ENCODE measurements at regions of chr2 and their contacts with region 1.

Region 1: DNA sequence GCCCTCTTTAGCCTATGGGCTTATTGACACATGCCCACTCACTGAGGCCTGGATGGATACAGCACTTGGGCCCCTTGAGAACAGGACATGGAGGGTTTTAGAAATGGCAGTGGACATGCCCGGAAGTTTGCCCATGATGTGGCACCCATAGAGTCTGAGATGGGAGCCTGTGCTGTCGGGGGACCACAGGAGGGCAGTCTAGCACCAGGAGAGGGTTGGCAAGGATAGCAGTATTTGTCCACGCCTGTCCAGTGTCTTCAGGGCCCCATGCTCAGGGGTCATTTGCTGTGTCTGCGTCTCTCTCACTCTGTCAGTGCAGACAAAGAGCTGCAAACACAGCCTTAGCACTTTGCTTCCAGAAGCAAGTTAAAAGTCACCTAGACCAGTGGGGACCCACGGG is 48.7 kb downstream of the IL1RL2 start:
- DNase-seq: peak; percentile 20 to 34 (median 32)
- H3K4me3 ChIP-seq: no peak overlapping the region
- H3K27ac ChIP-seq: no peak overlapping the region
- H3K4me1 ChIP-seq: no peaks in the 10 kb centered on the region
- H3K27me3 ChIP-seq: no peaks in the 10 kb centered on the region

Region 2: DNA sequence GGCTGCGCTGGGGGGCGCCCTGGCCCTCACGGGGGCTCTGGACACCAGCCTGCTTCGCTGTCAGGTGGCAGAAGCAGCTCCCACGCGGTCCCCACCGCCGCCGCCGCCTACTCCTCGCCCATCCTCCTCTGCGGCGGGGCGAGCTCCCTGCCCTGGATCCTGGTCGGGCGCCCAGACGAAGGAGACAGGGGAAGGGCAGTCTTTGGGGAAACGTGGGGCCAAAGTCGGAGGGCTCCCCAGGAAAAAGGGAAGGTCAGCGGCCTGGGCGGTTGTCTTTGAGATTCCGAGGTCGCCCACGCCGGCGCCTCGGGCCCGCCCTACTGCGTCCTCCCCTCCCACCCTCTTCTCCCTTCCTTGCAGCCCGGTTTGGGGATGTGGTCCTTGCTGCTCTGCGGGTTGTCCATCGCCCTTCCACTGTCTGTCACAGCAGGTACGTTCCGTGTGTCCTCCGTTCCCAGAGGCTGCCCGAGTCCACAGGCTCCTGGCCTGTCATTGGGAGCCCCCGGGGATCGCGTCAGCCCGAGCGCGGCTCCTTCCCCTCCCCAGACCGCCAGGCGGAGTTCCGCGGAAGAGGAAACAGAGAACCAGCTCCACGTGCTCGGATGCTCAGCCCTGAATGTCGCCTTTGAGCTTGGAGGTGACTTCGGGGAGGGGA is 47.9 kb before region 1 on chr2:
- CTCF ChIA-PET with region 1: interaction called, 19 read pairs
- POLR2A ChIA-PET with region 1: no interaction called
- DNase-seq: peak; percentile 36 to 52 (median 49)
- H3K4me3 ChIP-seq: peak overlapping the region in 6 of 7 experiments; percentile 6 to 75 (median 52)
- H3K27ac ChIP-seq: no peak overlapping the region
- H3K4me1 ChIP-seq: peaks cover 0 to 12% (median 4%) of the 10 kb centered on the region in 4 experiments
- H3K27me3 ChIP-seq: peaks cover 0 to 14% (median 0%) of the 10 kb centered on the region in 5 experiments

Region 3: DNA sequence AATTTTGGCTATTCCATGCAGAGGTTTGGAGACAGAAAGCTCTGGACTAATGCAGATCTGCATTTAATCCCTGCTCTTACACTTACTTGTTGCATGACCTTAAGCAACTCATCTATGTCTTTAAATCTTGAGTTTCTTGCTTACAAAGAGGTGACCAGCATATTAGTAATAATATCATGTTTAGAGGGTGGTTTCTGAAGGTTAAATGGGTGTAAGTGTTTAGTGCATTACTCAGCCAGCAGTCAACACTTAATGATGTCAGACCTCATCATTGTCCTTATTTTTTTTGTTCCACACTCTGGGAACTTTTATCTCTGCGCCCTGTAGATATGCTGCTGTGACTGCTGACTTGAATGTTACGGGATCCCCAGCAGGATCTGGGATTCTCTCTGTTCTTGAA is 77.5 kb after region 1 on chr2:
- CTCF ChIA-PET with region 1: no interaction called
- POLR2A ChIA-PET with region 1: no interaction called
- DNase-seq: no peak
- H3K4me3 ChIP-seq: no peak overlapping the region
- H3K27ac ChIP-seq: no peak overlapping the region
- H3K4me1 ChIP-seq: peaks cover 0 to 13% (median 8%) of the 10 kb centered on the region in 4 experiments
- H3K27me3 ChIP-seq: no peaks in the 10 kb centered on the region

Region 4: DNA sequence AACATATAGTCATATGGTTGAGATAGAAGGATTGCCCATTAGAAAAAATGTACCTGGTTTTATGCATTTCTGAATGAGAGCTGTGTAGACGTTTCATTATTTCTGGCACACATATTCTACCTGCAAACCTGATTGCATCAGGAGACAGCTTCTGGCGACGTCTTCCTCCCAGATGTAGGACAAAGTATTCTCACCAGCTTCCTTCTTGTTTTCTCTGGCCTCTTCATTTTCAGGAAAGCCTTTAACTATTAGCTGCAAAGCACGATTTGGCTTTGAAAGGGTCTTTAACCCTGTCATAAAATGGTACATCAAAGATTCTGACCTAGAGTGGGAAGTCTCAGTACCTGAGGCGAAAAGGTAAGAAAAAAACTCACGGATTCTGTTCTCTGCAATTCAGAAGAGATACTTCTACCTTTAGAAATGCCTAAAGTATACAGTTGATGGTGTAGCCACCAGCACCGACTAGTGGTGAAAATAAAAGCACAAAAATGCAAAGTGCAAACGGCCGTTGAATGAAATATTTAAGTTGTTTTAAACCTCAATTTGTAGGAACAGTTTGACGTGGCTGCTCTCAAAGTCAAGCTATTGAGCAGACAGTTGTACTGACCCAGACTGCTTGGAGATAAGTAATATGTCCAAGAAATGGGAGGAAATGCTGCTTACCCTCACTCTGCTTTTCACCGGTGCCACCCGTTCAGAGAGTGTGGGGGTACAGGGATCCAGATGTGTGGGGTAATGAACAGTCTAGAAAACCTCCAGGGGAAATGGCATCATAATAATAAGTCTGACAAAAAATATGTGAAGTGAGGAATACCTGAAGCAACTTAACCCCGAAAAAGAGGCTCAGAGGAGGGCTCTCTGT is 207.7 kb after region 1 on chr2:
- CTCF ChIA-PET with region 1: interaction called, 33 read pairs
- POLR2A ChIA-PET with region 1: interaction called, 3 read pairs
- DNase-seq: peak; percentile 53 to 69 (median 59)
- H3K4me3 ChIP-seq: peak overlapping the region in 1 of 7 experiments; percentile 49
- H3K27ac ChIP-seq: no peak overlapping the region
- H3K4me1 ChIP-seq: peaks cover 4 to 15% (median 5%) of the 10 kb centered on the region in 4 experiments
- H3K27me3 ChIP-seq: no peaks in the 10 kb centered on the region

Region 5: DNA sequence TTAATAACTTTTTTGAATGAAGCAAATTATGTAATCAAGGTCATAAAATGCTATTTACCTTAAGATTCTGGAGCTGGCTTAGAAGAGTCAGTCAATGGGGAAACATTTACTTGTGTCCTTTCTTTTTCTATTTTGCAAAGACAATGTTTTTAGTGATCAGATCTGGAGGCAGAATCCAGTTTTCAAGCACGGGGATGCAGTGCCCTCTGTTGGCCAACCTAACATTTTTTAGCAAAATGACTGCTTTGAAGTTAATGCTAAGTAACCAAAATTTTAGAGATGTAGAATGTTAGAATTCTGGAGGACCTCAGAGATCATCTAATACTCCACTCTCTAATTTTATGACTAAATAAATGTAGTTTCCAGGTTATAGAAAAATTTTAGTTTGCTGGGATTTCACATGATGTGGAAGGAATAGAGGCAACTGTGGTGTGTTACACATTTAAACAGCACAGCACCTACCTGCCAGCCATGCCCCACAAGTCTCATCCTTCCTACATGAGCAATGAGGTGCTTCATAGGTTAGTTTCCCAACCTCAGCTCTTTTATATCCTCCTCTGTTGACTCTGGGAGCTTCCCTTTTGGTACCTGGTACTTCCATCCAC is 214.0 kb after region 1 on chr2:
- CTCF ChIA-PET with region 1: interaction called, 33 read pairs
- POLR2A ChIA-PET with region 1: interaction called, 3 read pairs
- DNase-seq: peak; percentile 48 to 79 (median 69)
- H3K4me3 ChIP-seq: no peak overlapping the region
- H3K27ac ChIP-seq: no peak overlapping the region
- H3K4me1 ChIP-seq: peaks cover 0 to 10% (median 3%) of the 10 kb centered on the region in 4 experiments
- H3K27me3 ChIP-seq: no peaks in the 10 kb centered on the region